Gastrocnemius medialis (tissue), 4 donors: ENCODE measurements at regions of chr4 and their contacts with region 1.

Region 1: GRCh38 chr4:69858690-69859089 is 1.3 kb downstream of the SULT1E1 start:
- DNase-seq: no peak
- ATAC-seq: no peak
- H3K4me3 ChIP-seq: no peak overlapping the region
- H3K27ac ChIP-seq: no peak overlapping the region
- H3K4me1 ChIP-seq: no peaks in the 10 kb centered on the region
- H3K27me3 ChIP-seq: no peaks in the 10 kb centered on the region
- CTCF ChIP-seq: no peak
- POLR2A ChIP-seq: no peak

Region 2: DNA sequence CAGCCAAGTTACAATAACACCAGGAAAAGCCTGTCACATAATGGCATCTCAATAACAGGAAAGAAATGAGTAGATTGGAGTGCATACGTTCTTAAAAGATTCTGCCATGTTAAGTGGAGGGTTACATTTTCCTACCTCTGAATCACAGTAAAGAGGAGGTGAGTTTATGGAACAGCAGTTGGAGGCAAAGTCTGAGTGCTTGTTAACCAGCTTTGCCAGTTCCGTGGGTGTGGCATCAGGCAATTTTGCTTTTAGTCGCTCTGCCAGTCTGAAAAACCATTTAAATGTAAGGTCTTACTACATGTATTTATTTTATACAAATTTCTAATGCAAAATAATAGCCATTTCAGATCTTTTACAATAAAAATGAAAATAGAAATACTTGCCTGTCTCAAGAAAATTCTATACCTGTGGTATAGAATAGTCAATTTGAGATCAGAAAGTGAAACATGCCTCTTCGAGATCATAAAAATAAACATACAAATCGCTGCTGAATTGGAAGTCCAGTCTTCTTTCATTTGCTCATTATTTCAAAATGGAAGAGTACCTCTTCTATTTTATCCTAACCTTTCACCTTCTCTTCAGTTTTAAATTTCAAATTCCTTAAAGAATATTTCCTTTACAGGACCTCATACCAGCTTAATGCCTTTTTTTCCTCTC is 1893.8 kb after region 1 on chr4:
- in situ Hi-C with region 1: no loop called
- intact Hi-C with region 1: loop called (anchors 10 kb)
- DNase-seq: no peak
- ATAC-seq: no peak
- H3K4me3 ChIP-seq: no peak overlapping the region
- H3K27ac ChIP-seq: no peak overlapping the region
- H3K4me1 ChIP-seq: no peaks in the 10 kb centered on the region
- H3K27me3 ChIP-seq: no peaks in the 10 kb centered on the region
- CTCF ChIP-seq: no peak
- POLR2A ChIP-seq: no peak